Activated T-helper 1 cell treated with anti-CD3 and anti-CD28 coated beads, Interleukin-12 subunit alpha, Interleukin-12 subunit beta, Interleukin-2, Interleukin-4 antibody, amounts not matched to agents 30 ng/mL and 10 ng/mL and 1 ng/mL, durations not matched to agents 14 hours and 24 hours and 36 hours (primary cell): ENCODE measurements at regions of chr6 and their contacts with region 1.

Region 1: GRCh38 chr6:12804952-12805645 is 88.5 kb downstream of the PHACTR1 start:
- DNase-seq: no peak
- H3K4me3 Mint-ChIP-seq: no peak overlapping the region
- H3K27ac Mint-ChIP-seq: no peak overlapping the region
- H3K4me1 Mint-ChIP-seq: no peaks in the 10 kb centered on the region
- H3K27me3 Mint-ChIP-seq: no peaks in the 10 kb centered on the region

Region 2: DNA sequence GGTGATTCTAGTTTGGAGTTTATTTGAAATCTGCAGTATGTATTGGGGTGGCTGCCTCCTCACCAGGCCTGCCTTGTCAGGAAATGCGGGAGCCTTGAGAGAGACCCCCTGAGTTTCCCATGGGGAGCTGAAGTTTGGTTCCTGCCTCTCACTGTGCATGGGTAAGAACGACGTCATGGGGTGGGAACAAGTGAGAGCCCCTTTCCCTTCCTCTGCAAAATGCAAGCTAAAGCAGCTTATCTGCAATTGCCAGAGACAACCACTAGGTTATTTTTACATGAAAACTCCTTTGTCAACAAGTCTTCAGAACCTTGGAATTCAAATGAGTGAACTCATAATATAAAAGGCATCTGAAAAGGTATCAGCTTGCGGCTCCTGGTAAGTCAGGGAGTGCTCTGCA is 1209.2 kb before region 1 on chr6:
- intact Hi-C with region 1: no loop called
- DNase-seq: no peak
- H3K4me3 Mint-ChIP-seq: no peak overlapping the region
- H3K27ac Mint-ChIP-seq: no peak overlapping the region
- H3K4me1 Mint-ChIP-seq: no peaks in the 10 kb centered on the region
- H3K27me3 Mint-ChIP-seq: peaks cover 1% of the 10 kb centered on the region

Region 3: DNA sequence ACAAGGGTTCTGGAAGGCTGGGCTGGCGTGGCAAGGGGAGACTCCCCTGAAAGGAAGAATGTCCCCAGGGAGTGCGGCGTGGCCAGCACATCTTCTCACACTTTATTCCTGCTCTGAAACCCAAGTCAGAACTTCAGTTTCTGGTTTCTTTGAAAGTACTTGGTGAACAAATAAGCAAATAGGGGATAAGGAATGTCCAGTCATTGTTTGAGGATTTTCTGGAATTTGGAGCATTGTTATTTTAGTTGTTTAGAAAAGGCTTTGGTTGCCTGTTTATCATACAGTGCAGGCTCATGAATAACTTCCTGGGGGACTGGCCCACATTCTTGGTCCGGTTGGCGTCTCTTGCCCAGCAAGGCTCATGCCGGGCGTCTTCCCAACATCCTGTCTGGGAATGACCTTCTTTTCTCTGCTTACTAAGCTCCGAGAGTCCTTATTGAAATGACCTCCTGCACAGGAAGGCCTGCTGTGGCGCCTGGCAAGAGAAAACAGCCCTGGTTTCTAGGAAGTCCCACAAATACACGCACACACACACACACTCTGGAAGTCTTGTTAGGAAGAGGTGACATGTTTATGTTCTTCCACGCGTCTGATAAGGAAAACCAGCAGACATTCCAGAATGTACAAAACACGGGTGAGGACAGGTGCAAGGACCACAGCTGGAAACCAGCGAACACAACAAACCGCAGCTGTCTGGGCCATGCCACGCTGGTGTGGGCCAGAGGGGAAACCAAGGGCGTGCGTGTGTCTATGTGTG is 1195.6 kb before region 1 on chr6:
- intact Hi-C with region 1: loop called (anchors 5 kb)
- DNase-seq: no peak
- H3K4me3 Mint-ChIP-seq: no peak overlapping the region
- H3K27ac Mint-ChIP-seq: no peak overlapping the region
- H3K4me1 Mint-ChIP-seq: no peaks in the 10 kb centered on the region
- H3K27me3 Mint-ChIP-seq: peaks cover 5% of the 10 kb centered on the region